Activated CD8-positive, alpha-beta T cell treated with anti-CD3 and anti-CD28 coated beads, Interleukin-2, amount 10 ng/mL, durations not matched to agents 7 days and 5 days (primary cell): ENCODE measurements at regions of chr12 and their contacts with region 1.

Region 1: DNA sequence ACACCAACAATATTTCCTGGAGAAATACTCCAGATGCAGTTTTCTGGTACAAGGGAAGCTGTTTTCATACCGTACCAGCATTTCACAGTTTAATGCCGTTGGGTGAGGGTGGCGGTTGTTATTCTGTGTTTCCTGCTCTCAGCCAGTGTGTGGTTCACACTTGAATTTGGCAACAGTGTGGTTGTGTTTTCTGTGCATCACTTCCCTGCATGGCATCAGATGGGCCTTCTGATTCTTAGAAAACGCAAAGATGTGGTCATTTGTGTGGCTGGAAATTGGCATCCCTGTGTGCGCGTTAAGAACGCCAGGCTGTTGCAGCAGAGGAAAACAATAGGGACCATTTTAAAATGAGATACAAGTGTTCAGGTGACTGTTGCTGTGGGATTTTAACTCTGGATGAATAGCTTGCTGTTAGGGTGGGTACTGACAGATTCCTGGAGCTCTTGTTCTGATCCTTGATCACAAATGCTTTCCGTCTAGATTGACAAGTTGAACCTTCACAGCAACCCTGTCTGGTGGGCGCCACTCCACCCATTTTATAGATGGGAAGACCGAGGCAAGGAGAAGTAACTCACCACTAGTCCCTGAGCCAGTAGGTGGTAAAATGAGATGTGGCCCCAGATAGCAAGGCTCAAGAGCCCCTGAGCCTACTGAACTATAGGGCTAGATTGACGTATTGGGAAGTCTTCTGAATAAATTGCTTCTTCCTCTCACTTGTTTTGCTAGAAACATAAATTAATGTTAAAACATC is 231.2 kb downstream of the CHST11 start:
- DNase-seq: peak; percentile 86
- ATAC-seq: peak; percentile 66
- H3K4me3 Mint-ChIP-seq: peak overlapping the region; percentile 61
- H3K27ac Mint-ChIP-seq: peak overlapping the region; percentile 94
- H3K4me1 Mint-ChIP-seq: peaks cover 93% of the 10 kb centered on the region
- H3K27me3 Mint-ChIP-seq: no peaks in the 10 kb centered on the region

Region 2: DNA sequence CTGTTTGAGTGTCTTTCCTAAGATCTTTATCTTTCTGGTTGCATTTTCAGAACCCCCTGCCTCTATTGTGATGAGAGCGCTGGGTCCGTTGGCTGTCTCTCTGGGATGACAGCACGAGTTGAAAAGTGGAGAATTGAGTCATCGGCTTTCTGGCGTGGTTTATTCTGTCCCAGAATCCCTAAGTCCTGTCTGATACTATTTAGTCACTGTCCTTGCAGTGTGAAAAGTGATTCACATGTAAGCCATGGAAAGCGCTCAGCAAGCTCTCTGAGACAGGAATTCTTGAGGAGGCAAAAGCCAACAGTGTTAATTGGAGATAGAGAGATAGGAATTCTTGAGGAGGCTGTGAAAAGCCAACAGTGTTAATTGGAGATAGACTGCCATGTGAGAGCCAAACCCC is 109.5 kb before region 1 on chr12:
- CTCF ChIA-PET with region 1: no interaction called
- POLR2A ChIA-PET with region 1: no interaction called
- DNase-seq: no peak
- ATAC-seq: no peak
- H3K4me3 Mint-ChIP-seq: no peak overlapping the region
- H3K27ac Mint-ChIP-seq: no peak overlapping the region
- H3K4me1 Mint-ChIP-seq: peaks cover 85% of the 10 kb centered on the region
- H3K27me3 Mint-ChIP-seq: no peaks in the 10 kb centered on the region

Region 3: GRCh38 chr12:104671407-104672098 is 16.4 kb before region 1 on chr12:
- CTCF ChIA-PET with region 1: interaction called, 5 read pairs
- POLR2A ChIA-PET with region 1: interaction called, 10 read pairs
- DNase-seq: peak; percentile 73
- ATAC-seq: peak; percentile 63
- H3K4me3 Mint-ChIP-seq: peak overlapping the region; percentile 65
- H3K27ac Mint-ChIP-seq: peak overlapping the region; percentile 88
- H3K4me1 Mint-ChIP-seq: peaks cover 60% of the 10 kb centered on the region
- H3K27me3 Mint-ChIP-seq: no peaks in the 10 kb centered on the region

Region 4: GRCh38 chr12:104790296-104791125 is 102.5 kb after region 1 on chr12:
- CTCF ChIA-PET with region 1: no interaction called
- POLR2A ChIA-PET with region 1: no interaction called
- DNase-seq: peak; percentile 43
- ATAC-seq: peak; percentile 51
- H3K4me3 Mint-ChIP-seq: no peak overlapping the region
- H3K27ac Mint-ChIP-seq: no peak overlapping the region
- H3K4me1 Mint-ChIP-seq: peaks cover 6% of the 10 kb centered on the region
- H3K27me3 Mint-ChIP-seq: peaks cover 2% of the 10 kb centered on the region

Region 5: GRCh38 chr12:104846056-104846767 is 158.2 kb after region 1 on chr12:
- CTCF ChIA-PET with region 1: no interaction called
- POLR2A ChIA-PET with region 1: no interaction called
- DNase-seq: no peak
- ATAC-seq: no peak
- H3K4me3 Mint-ChIP-seq: no peak overlapping the region
- H3K27ac Mint-ChIP-seq: no peak overlapping the region
- H3K4me1 Mint-ChIP-seq: no peaks in the 10 kb centered on the region
- H3K27me3 Mint-ChIP-seq: peaks cover 28% of the 10 kb centered on the region